ENCODE measurements at regions of chr11 and their contacts with region 1.

Region 1: GRCh38 chr11:113994077-113994954 is 19.4 kb downstream of the HTR3A start:
- DNase-seq: peak; percentile 40 to 65 (median 50)
- ATAC-seq: peak; percentile 80
- H3K4me3 ChIP-seq: no peak overlapping the region
- H3K27ac ChIP-seq: no peak overlapping the region
- H3K4me1 ChIP-seq: no peaks in the 10 kb centered on the region
- H3K27me3 ChIP-seq: peaks cover 0 to 16% of the 10 kb centered on the region in 2 experiments; a peak in 2 of 5 replicates
- CTCF ChIP-seq: peak; percentile 70 to 77 (median 74)
- EP300 ChIP-seq: no peak
- POLR2A ChIP-seq: no peak
- RAD21 ChIP-seq: peak; percentile 82 to 89

Region 2: DNA sequence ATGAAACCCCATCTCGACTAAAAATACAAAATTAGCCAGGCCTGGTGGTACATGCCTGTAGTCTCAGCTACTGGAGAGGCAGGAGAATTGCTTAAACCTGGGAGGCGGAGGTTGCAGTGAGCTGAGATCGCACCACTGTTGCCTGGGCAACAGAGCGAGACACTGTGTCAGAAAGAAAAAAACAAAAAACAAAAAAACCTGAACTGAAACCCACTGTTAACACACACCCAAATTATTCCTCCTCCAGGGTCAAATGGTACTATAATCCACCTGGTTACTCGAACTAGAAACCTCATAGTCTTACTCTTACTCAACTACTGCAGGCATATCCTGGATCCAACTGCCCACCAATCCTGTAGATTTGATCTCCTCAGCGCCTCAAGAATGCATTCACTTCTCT is 154.5 kb before region 1 on chr11:
- CTCF ChIA-PET with region 1: no interaction called
- POLR2A ChIA-PET with region 1: no interaction called
- in situ Hi-C with region 1: no loop called
- intact Hi-C with region 1: no loop called
- DNase-seq: no peak
- ATAC-seq: no peak
- H3K4me3 ChIP-seq: no peak overlapping the region
- H3K27ac ChIP-seq: no peak overlapping the region
- H3K4me1 ChIP-seq: peaks cover 0 to 2% of the 10 kb centered on the region in 2 experiments; a peak in 1 of 5 replicates
- H3K27me3 ChIP-seq: no peaks in the 10 kb centered on the region
- CTCF ChIP-seq: no peak
- EP300 ChIP-seq: no peak
- POLR2A ChIP-seq: no peak
- RAD21 ChIP-seq: no peak

Region 3: DNA sequence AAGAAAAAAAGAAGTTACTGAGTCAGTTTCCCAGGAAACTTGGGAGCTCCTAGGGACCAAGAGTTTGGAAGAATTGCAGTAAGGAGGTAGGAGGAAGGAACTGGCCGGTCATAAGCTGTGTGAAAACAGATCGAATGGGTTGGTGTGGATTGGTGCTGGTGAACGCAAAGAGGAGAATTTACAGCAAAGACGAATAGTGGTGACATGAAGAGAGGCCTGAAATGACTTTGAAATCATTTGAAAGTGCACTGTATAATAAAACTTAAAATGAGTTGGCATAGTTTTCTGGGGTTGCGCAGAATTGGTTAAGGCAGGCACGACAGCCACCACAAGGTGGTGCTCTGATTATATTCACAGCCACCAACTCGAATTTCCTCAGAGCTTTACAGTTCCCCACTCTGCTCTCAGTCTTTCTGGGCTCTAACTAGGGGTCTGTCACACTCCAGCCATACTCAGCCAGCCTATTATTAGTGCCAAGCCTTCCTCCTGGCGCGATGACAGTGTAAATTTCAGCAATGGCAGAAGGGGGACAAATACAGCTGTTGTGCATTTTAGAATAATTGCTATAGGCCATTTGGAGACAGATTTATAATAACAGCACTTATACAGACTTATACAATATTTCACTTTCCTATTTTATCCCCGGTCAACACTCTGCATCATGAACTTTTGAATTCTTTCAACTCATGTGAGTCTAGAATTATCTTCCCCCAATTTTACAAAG is 98.0 kb before region 1 on chr11:
- CTCF ChIA-PET with region 1: no interaction called
- POLR2A ChIA-PET with region 1: no interaction called
- in situ Hi-C with region 1: no loop called
- intact Hi-C with region 1: loop called (anchors 5 kb)
- DNase-seq: peak; percentile 45 to 57 (median 48)
- ATAC-seq: peak; percentile 94
- H3K4me3 ChIP-seq: no peak overlapping the region
- H3K27ac ChIP-seq: no peak overlapping the region
- H3K4me1 ChIP-seq: peaks cover 0 to 4% of the 10 kb centered on the region in 2 experiments; a peak in 1 of 5 replicates
- H3K27me3 ChIP-seq: 0 out of 5 replicates have a peak, but pooled peaks cover 2 to 4% of the 10 kb centered on the region in 2 experiments
- CTCF ChIP-seq: peak; percentile 70 to 81 (median 81)
- EP300 ChIP-seq: no peak
- POLR2A ChIP-seq: no peak
- RAD21 ChIP-seq: peak; percentile 38 to 70

Measured in K562 (cell line).